Activated CD8-positive, alpha-beta T cell treated with anti-CD3 and anti-CD28 coated beads for 36 hours (primary cell): ENCODE measurements at regions of chr1 and their contacts with region 1.

Region 1: DNA sequence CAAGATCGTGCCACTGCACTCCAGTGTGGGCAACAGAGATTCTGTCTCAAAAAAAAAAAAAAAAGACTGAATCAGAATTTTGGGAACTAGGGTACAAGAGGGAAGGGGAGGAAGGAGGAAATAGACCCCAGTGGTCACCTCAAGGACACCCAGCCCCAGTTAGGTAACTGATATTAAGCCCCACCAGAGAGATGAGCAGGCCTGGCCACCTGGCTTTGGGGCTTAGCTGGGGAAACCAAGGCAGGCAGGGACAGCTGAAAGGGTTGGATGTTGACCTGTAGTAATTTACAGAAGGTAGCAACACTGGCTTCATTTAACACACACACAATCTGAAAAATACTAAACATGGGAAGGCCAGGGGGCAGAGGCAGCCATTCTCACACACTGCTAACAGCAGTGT is 5.2 kb upstream of the C1orf122 start:
- DNase-seq: no peak
- ATAC-seq: no peak
- H3K4me3 Mint-ChIP-seq: no peak overlapping the region
- H3K27ac Mint-ChIP-seq: no peak overlapping the region
- H3K4me1 Mint-ChIP-seq: peaks cover 19% of the 10 kb centered on the region
- H3K27me3 Mint-ChIP-seq: no peaks in the 10 kb centered on the region
- CTCF ChIP-seq: no peak

Region 2: DNA sequence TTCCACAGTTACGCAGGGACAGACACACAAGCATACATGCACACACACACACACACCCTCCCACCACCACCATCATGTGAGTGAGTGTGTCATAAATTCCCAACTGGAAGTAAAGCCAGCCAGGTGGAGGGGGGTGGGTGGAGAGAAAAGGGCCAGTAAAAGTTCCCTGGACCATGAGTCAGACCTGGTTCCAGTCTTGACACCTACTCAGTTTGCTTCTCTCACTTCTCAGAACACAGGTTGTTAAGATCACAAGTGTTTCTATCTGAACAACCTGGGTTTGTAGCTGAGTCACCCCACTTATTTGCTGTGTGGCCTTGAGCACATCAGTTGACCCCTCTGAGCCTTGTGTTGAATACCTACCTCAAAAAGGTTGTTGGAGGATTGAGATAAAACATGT is 47.1 kb before region 1 on chr1:
- CTCF ChIA-PET with region 1: no interaction called
- POLR2A ChIA-PET with region 1: interaction called, 8 read pairs
- intact Hi-C with region 1: loop called (anchors 5 kb)
- DNase-seq: peak; percentile 54
- ATAC-seq: peak; percentile 90
- H3K4me3 Mint-ChIP-seq: no peak overlapping the region
- H3K27ac Mint-ChIP-seq: no peak overlapping the region
- H3K4me1 Mint-ChIP-seq: peaks cover 19% of the 10 kb centered on the region
- H3K27me3 Mint-ChIP-seq: peaks cover 23% of the 10 kb centered on the region
- CTCF ChIP-seq: no peak

Region 3: GRCh38 chr1:37841652-37842051 is 39.2 kb after region 1 on chr1:
- CTCF ChIA-PET with region 1: no interaction called
- POLR2A ChIA-PET with region 1: no interaction called
- intact Hi-C with region 1: no loop called
- DNase-seq: no peak
- ATAC-seq: no peak
- H3K4me3 Mint-ChIP-seq: no peak overlapping the region
- H3K27ac Mint-ChIP-seq: no peak overlapping the region
- H3K4me1 Mint-ChIP-seq: peaks cover 30% of the 10 kb centered on the region
- H3K27me3 Mint-ChIP-seq: no peaks in the 10 kb centered on the region
- CTCF ChIP-seq: no peak

Region 4: DNA sequence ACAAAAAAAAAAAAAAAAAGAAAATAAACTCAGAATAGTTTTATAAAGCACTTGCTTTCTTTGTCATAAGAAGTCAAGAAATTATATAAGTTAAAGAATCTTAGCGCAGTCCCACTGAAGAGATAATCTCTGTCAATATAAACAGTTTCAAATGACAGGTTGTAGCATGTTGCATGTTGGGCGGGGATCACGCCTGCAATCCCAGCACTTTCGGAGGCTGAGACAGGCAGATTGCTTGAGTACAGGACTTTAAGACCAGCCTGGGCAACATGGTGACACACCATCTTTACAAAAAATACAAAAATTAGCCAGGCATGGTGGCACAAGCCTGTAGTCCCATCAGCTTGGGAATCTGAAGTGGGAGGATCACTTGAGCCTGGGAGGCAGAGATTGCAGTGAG is 162.9 kb after region 1 on chr1:
- CTCF ChIA-PET with region 1: no interaction called
- POLR2A ChIA-PET with region 1: no interaction called
- intact Hi-C with region 1: no loop called
- DNase-seq: no peak
- ATAC-seq: no peak
- H3K4me3 Mint-ChIP-seq: no peak overlapping the region
- H3K27ac Mint-ChIP-seq: no peak overlapping the region
- H3K4me1 Mint-ChIP-seq: no peaks in the 10 kb centered on the region
- H3K27me3 Mint-ChIP-seq: no peaks in the 10 kb centered on the region
- CTCF ChIP-seq: no peak